ENCODE measurements at regions of chr6 and their contacts with region 1.

Region 1: DNA sequence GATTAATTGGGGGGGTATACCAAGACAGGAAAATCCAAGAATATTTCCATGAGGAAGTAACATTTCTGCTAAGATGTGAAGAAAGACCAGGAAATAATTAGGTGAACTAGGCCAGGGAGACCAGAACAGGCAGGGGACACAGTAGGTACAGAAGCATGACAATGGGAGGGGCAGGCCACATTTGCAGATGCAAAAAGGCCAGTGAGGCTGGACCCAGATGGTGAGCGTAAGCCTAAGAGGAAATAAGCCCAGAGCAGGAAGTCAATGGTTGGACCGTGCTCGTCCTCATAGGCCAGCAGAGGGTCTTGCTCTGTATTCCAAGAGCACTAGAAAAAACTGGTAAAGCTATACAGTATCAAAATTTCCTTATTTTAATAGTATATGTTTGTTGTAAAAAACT is 9.4 kb downstream of the CEP162 start:
- DNase-seq: no peak
- H3K4me3 ChIP-seq: no peak overlapping the region
- H3K27ac ChIP-seq: no peak overlapping the region
- H3K4me1 ChIP-seq: no peaks in the 10 kb centered on the region
- H3K27me3 ChIP-seq: no peaks in the 10 kb centered on the region
- CTCF ChIP-seq: no peak
- POLR2A ChIP-seq: no peak

Region 2: DNA sequence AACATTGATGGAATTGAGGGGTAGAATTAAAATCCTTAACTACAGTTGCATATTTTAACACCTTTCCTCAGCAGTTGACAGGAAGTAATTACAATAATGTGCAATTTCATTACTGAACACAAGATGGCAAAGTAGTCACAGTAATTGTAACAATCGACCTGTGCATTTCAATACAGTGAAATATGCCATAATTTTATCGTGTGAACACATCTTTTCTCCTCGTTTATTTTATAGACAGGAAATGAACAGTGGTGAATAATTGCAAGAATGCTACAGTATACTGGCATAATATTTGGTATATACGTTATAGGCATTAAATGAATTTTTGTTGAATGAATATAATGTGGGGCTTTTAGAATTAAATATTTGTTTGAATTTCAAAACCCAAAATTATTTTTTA is 333.6 kb before region 1 on chr6:
- intact Hi-C with region 1: loop called (anchors 5 kb)
- DNase-seq: no peak
- H3K4me3 ChIP-seq: no peak overlapping the region
- H3K27ac ChIP-seq: no peak overlapping the region
- H3K4me1 ChIP-seq: no peaks in the 10 kb centered on the region
- H3K27me3 ChIP-seq: no peaks in the 10 kb centered on the region
- CTCF ChIP-seq: peak in 2 of 3 experiments; percentile 55 to 59
- POLR2A ChIP-seq: no peak